ENCODE measurements at regions of chr5 and their contacts with region 1.

Region 1: DNA sequence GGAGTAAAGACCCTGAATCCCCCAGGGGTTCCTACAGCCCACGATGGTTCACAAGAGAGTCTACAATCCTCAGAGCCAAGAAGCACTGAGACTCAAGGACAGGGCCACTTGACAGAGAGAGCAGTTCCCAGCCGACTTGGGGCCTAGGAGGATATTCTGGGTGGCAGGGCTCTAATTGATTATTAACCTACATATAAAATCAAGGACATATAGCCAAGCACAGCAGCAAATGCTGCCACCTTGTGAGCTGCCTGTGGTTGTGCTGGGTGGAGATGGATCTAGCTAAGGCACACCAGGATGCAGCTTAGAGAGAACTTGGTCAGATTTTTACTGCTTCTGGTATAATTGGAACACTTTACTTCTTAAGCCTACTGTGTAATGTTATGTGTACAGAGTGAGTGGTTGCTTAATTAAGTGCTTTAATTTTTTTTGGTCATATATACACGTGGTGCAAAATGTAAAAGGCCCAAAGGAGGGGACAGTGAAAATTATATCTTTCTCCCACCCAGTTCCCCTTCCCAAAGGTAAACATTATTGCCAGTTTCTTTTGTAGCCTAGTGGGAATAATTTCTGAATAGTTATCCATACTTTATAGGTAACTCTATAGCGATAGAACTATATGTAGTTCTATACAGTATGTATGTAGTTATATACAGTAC is 78.8 kb downstream of the F2RL2 start:
- DNase-seq: peak; percentile 69
- H3K4me3 ChIP-seq: no peak overlapping the region
- H3K27ac ChIP-seq: peak overlapping the region in 1 of 2 experiments; percentile 39; a peak in 1 of 4 replicates
- H3K4me1 ChIP-seq: peaks cover 3 to 11% of the 10 kb centered on the region in 2 experiments; a peak in 2 of 4 replicates
- H3K27me3 ChIP-seq: no peaks in the 10 kb centered on the region
- CTCF ChIP-seq: peak; percentile 82
- EP300 ChIP-seq: no peak
- RAD21 ChIP-seq: peak; percentile 91

Region 2: GRCh38 chr5:76565009-76565408 is 20.6 kb after region 1 on chr5:
- CTCF ChIA-PET with region 1: interaction called, 11 read pairs
- POLR2A ChIA-PET with region 1: no interaction called
- DNase-seq: no peak
- H3K4me3 ChIP-seq: no peak overlapping the region
- H3K27ac ChIP-seq: no peak overlapping the region
- H3K4me1 ChIP-seq: no peaks in the 10 kb centered on the region
- H3K27me3 ChIP-seq: no peaks in the 10 kb centered on the region; the same call in 1 of the 2 replicates
- CTCF ChIP-seq: no peak
- EP300 ChIP-seq: no peak
- RAD21 ChIP-seq: no peak

Region 3: GRCh38 chr5:76766746-76767145 is 222.3 kb after region 1 on chr5:
- CTCF ChIA-PET with region 1: no interaction called
- POLR2A ChIA-PET with region 1: no interaction called
- DNase-seq: no peak
- H3K4me3 ChIP-seq: no peak overlapping the region
- H3K27ac ChIP-seq: peak overlapping the region in 1 of 2 experiments; percentile 25; a peak in 1 of 4 replicates
- H3K4me1 ChIP-seq: no peaks in the 10 kb centered on the region
- H3K27me3 ChIP-seq: no peaks in the 10 kb centered on the region
- CTCF ChIP-seq: no peak
- EP300 ChIP-seq: no peak
- RAD21 ChIP-seq: no peak